ENCODE measurements at regions of chr1 and their contacts with region 1.

Region 1: GRCh38 chr1:210207597-210208450 is 24.8 kb upstream of the SERTAD4 start:
- DNase-seq: no peak
- ATAC-seq: no peak
- H3K4me3 ChIP-seq: no peak overlapping the region
- H3K27ac ChIP-seq: no peak overlapping the region
- H3K4me1 ChIP-seq: no peaks in the 10 kb centered on the region
- H3K27me3 ChIP-seq: no peaks in the 10 kb centered on the region
- CTCF ChIP-seq: no peak

Region 2: DNA sequence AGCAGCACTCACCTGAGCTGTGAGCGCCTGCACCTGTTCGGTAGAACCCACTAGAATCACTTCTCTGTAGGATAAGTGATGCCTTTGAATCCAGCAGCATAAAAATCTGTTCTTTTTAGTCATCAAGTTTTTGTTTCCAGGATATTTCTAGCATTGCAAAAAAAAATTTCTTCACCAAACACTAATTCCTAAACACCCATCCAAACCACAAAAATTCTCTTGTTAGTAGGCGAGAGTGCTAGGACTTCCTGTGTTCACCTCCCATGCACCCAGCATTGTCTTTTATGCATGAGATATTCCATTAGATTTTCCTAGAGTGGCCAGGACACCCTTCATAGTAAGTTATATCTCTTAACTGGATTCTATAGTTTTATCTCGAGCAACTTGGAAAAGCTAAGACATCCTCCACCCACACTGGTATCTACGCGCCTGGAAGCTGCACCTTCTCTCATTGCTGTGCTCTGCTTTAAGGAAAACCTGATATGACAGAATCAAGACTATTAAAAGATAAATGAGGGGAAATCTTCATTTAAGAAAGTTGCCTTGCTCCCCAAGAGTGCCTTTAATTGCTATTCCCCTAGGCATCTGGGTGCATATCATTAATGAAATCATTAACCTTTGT is 37.0 kb after region 1 on chr1:
- CTCF ChIA-PET with region 1: no interaction called
- POLR2A ChIA-PET with region 1: no interaction called
- intact Hi-C with region 1: loop called (anchors 2 kb)
- DNase-seq: no peak
- ATAC-seq: no peak
- H3K4me3 ChIP-seq: no peak overlapping the region
- H3K27ac ChIP-seq: no peak overlapping the region
- H3K4me1 ChIP-seq: peaks cover 24% of the 10 kb centered on the region
- H3K27me3 ChIP-seq: no peaks in the 10 kb centered on the region
- CTCF ChIP-seq: no peak

Region 3: DNA sequence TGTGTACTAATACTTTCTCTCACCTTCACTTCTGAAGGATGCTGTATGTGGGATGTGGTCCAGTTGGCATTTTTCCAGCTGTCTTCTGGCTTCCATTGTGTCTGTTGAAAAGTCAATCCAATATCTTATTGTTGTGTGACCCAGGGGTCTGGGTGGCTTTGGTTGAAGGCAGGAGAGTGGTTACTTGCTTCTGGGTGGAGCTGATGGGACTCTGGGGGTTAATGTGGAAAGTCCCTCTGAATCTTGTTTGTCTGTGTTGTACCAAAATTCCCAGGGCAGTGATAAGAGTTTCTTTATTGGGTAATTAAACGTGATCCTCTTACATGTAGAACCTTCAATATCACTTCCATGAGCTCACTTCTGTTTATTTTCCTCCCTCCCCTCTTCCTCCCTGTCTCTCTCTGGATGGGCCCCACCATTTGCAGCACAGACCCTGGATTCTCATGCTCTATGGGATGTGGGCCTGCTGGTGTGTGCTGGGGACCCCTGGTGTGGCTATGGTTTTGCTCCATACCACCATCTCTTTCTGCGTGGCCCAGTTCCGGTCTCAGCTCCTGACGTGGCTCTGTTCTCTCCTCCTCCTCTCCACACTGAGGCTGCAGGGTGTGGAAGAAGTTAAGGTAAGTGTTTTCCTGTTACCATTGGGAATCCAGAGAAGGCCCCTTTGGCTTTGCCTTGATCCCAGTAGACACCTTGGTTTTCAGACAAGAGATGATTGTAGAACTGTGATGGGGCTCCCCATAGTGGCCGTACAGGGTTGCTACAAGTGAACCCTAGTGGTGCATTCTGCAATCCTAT is 192.4 kb after region 1 on chr1:
- CTCF ChIA-PET with region 1: no interaction called
- POLR2A ChIA-PET with region 1: no interaction called
- intact Hi-C with region 1: no loop called
- DNase-seq: peak; percentile 81
- ATAC-seq: peak; percentile 98
- H3K4me3 ChIP-seq: no peak overlapping the region
- H3K27ac ChIP-seq: 0 out of 2 replicates have a peak overlapping the region, but pooled peaks have one; percentile 16
- H3K4me1 ChIP-seq: peaks cover 9% of the 10 kb centered on the region
- H3K27me3 ChIP-seq: no peaks in the 10 kb centered on the region
- CTCF ChIP-seq: peak; percentile 97

Measured in PC-3 (cell line).